Activated B cell treated with CpG ODN at 0.5 μM for 24 hours (primary cell): ENCODE measurements at regions of chr20 and their contacts with region 1.

Region 1: GRCh38 chr20:50120897-50121693 is 8.1 kb upstream of the UBE2V1 start:
- DNase-seq: peak; percentile 30
- ATAC-seq: peak; percentile 77
- H3K4me3 Mint-ChIP-seq: no peak overlapping the region
- H3K27ac Mint-ChIP-seq: no peak overlapping the region
- H3K4me1 Mint-ChIP-seq: peaks cover 3% of the 10 kb centered on the region
- H3K27me3 Mint-ChIP-seq: no peaks in the 10 kb centered on the region
- CTCF ChIP-seq: no peak

Region 2: DNA sequence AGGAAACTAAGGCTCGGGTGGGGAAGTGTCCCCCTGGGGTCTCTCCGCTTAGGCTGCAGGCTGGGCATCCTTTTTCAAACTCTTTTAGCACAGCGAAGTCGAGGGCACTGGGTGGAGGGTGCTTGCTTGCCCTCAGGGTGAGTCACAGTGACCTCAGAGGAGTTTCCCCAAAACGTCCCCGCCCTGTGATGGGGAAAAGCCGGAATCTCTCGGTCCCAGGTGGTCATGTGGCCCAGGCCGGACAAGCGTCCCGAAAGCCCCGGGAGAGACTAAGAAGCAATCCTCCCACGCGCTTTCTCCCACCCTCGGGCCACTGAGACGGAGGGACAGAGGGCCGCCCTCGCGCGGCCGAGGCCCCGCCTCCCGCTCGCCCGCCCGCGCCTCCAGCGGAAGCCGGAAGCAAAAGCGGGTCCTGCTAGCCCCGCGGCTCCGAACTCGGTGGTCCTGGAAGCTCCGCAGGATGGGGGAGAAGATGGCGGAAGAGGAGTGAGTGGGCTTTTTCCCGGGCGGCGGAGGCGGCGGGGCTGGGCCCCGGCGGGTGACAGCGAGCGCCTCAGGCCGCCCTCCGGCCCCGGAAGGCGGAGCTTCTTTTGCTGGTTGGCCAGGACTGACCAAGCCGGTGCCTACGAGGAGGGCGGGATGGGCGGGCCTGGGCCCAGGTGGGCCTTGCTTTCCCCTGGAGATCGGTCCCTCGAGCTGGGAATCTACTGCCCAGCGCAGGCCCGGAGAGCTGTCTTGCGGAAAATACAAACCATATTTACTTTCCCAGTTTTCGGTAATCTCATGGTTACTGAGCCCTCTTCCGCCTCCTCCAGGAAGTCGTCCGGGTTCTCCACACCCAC is 308.4 kb before region 1 on chr20 and contains the start of gene SLC9A8:
- CTCF ChIA-PET with region 1: no interaction called
- POLR2A ChIA-PET with region 1: no interaction called
- intact Hi-C with region 1: no loop called
- DNase-seq: peak; percentile 84
- ATAC-seq: peak; percentile 88
- H3K4me3 Mint-ChIP-seq: peak within 1 kb of the TSS; percentile 95
- H3K27ac Mint-ChIP-seq: peak within 1 kb of the TSS; percentile 94
- H3K4me1 Mint-ChIP-seq: peaks cover 72% of the 10 kb centered on the region
- H3K27me3 Mint-ChIP-seq: no peaks in the 10 kb centered on the region
- CTCF ChIP-seq: no peak
- total RNA-seq, gene SLC9A8: 49.2 and 65.7 TPM in 2 replicates

Region 3: GRCh38 chr20:50133474-50134217 is 12.6 kb after region 1 on chr20:
- CTCF ChIA-PET with region 1: interaction called, 3 read pairs
- POLR2A ChIA-PET with region 1: no interaction called
- intact Hi-C with region 1: loop called (anchors 1 kb)
- DNase-seq: no peak
- ATAC-seq: no peak
- H3K4me3 Mint-ChIP-seq: no peak overlapping the region
- H3K27ac Mint-ChIP-seq: no peak overlapping the region
- H3K4me1 Mint-ChIP-seq: no peaks in the 10 kb centered on the region
- H3K27me3 Mint-ChIP-seq: no peaks in the 10 kb centered on the region
- CTCF ChIP-seq: no peak

Region 4: GRCh38 chr20:50153485-50154377 is 32.6 kb after region 1 on chr20 and contains the start of gene PEDS1:
- CTCF ChIA-PET with region 1: interaction called, 16 read pairs
- POLR2A ChIA-PET with region 1: interaction called, 15 read pairs
- intact Hi-C with region 1: no loop called
- DNase-seq: peak; percentile 78
- ATAC-seq: peak; percentile 98
- H3K4me3 Mint-ChIP-seq: peak within 1 kb of the TSS; percentile 85
- H3K27ac Mint-ChIP-seq: peak within 1 kb of the TSS; percentile 59
- H3K4me1 Mint-ChIP-seq: peaks cover 36% of the 10 kb centered on the region
- H3K27me3 Mint-ChIP-seq: no peaks in the 10 kb centered on the region
- CTCF ChIP-seq: no peak
- total RNA-seq, gene PEDS1: 9.8 and 9.9 TPM in 2 replicates

Region 5: DNA sequence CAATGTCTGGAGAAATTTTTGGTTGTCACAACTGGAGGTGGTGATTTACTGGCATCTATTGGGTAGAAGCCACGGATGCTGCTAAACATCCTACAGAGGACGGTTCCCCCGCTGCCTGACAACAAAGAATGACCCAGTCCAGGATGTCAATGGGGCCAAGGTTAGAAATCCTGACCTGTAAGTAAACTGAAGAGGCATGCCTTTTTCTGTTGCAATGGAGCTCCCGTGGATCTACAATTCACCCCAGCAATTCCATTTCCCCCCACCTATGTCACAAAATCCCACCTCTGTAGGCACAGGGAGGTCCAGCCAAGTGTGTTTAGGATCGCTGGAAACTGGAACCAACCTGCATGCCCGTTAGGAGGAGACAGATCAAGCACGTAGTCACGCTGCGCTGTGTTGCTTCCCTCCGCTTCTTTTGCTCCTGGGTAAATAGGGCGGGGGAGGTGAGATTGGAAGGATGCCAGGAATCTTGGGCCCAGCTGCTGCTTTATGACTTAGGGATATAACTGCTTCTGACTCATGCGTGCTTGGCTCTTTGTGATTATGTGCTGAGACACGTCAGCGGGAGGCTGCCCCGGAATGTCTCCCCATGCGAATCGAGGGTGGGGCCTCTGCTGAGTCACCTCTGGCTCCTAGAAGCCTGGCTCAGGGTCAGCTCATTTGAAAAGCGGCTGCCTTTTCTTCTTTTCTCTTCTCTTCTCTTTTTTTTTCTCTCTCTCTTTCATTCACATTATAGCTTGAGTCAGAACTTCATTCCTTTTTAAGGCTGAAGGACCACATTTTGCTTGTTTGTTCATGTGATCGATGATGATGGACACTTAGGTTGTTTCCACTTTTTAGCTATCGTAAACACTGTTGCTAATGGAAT is 44.8 kb after region 1 on chr20:
- CTCF ChIA-PET with region 1: interaction called, 134 read pairs
- POLR2A ChIA-PET with region 1: interaction called, 10 read pairs
- intact Hi-C with region 1: loop called (anchors 1 kb)
- DNase-seq: peak; percentile 66
- ATAC-seq: peak; percentile 99
- H3K4me3 Mint-ChIP-seq: peak overlapping the region; percentile 68
- H3K27ac Mint-ChIP-seq: peak overlapping the region; percentile 61
- H3K4me1 Mint-ChIP-seq: peaks cover 14% of the 10 kb centered on the region
- H3K27me3 Mint-ChIP-seq: peaks cover 6% of the 10 kb centered on the region
- CTCF ChIP-seq: no peak

Region 6: DNA sequence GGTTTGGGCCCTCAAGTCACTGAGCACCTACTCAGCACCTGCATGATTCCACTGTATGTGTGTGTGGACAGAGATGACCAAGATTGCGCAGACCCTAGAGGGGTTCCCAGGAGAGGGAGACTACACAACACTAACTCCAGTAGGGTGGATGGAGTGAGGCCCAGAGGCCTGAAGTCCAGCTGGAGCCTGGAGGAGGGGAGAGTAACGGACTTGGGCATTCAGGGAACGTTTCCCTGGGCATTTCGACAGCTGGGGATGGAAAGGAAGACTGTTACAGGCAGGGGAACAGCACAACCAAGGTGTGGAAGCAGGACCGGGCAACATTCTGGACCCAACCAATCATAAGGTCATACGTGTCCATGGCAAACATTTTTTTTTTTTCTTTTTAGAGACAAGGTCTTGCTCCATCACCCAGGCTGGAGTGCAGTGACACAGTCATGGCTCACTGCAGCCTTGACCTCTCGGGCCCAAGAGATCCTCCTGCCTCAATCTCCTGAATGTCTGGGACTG is 58.5 kb after region 1 on chr20:
- CTCF ChIA-PET with region 1: interaction called, 51 read pairs
- POLR2A ChIA-PET with region 1: interaction called, 4 read pairs
- intact Hi-C with region 1: loop called (anchors 1 kb)
- DNase-seq: no peak
- ATAC-seq: no peak
- H3K4me3 Mint-ChIP-seq: no peak overlapping the region
- H3K27ac Mint-ChIP-seq: no peak overlapping the region
- H3K4me1 Mint-ChIP-seq: no peaks in the 10 kb centered on the region
- H3K27me3 Mint-ChIP-seq: no peaks in the 10 kb centered on the region
- CTCF ChIP-seq: no peak

Region 7: DNA sequence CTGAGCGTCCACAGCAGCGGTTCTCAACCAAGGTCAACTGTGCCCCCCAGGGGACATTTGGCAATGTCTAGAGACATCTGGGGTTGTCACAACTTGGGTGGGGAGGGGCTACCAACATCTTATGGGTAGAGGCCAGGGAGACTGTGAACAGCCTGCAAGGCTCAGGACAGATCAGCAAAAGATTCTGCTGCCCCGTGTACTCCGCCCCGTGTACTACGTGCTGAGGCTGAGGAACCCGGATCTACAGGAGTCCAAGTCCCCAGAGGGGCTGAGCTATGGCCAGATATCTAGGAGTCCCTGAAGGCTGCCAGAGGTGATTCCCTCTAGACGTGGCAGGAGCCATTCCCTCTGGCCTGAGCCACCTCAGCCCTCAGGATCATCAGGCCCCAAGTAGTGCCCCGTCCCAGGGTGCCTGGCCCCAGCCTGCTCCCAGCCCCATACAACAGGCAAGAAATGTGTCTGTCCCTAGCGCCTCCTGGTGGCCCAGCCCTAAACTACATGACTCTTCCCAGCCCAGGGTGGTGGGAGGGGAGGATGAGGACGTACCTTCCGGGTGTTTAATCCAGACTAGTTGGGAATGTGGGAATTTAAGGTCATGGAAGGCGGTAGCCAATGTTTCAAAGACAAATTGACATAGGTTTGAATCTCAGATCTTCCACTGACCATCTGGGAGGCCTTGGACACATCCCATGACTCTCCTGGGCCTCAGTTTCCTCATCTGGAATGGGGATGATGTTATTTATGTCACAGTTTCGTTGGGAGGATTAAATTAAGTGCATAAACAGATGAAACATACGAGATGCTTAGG is 339.6 kb after region 1 on chr20:
- CTCF ChIA-PET with region 1: no interaction called
- POLR2A ChIA-PET with region 1: no interaction called
- intact Hi-C with region 1: loop called (anchors 5 kb)
- DNase-seq: peak; percentile 69
- ATAC-seq: peak; percentile 86
- H3K4me3 Mint-ChIP-seq: no peak overlapping the region
- H3K27ac Mint-ChIP-seq: no peak overlapping the region
- H3K4me1 Mint-ChIP-seq: peaks cover 5% of the 10 kb centered on the region
- H3K27me3 Mint-ChIP-seq: peaks cover 24% of the 10 kb centered on the region
- CTCF ChIP-seq: peak; percentile 42